ENCODE measurements at regions of chr3 and their contacts with region 1.

Region 1: DNA sequence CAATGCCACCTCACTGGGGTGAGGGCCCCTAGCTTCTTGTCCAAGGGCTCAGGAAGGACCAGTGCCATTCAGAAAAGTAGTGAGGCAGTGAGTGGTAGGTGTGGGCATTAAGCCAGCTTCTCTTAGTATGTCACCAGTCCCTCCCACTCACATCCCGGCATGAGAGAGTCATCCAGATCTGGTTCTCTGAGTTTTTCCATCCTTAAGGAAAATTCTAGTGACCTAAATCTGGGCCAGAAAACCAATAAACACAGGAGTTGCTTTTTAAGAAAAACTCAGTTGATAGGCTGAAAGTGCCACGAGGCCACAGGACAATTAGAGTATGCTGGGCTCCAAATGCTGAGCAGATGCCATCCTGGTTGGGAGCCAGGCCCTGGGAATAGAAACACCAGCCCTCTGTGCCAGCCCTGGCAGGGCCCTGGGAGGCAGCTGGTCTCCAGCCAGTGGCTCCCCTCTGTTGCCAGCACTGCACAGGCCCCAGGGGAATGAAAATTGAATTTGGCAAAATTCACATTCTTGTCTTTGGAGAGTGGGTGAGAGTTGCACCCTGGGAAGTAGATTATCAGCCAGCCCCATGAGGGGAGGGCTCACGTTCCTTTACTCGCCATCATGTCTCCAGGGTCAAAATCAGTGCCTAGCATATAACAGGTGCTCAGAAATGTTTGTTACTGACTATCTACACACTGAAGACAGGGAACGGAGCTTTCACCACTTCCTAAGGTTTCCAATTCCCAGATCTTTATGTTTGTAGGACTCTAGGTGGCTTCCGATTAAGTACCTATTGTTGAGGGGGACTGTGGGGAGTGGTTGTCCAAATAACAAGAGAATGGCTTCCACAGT is 52.8 kb downstream of the FAM43A start:
- DNase-seq: no peak
- ATAC-seq: no peak
- H3K4me3 Mint-ChIP-seq: no peak overlapping the region
- H3K27ac Mint-ChIP-seq: no peak overlapping the region
- H3K4me1 Mint-ChIP-seq: peaks cover 30% of the 10 kb centered on the region
- H3K27me3 Mint-ChIP-seq: no peaks in the 10 kb centered on the region
- CTCF ChIP-seq: no peak

Region 2: DNA sequence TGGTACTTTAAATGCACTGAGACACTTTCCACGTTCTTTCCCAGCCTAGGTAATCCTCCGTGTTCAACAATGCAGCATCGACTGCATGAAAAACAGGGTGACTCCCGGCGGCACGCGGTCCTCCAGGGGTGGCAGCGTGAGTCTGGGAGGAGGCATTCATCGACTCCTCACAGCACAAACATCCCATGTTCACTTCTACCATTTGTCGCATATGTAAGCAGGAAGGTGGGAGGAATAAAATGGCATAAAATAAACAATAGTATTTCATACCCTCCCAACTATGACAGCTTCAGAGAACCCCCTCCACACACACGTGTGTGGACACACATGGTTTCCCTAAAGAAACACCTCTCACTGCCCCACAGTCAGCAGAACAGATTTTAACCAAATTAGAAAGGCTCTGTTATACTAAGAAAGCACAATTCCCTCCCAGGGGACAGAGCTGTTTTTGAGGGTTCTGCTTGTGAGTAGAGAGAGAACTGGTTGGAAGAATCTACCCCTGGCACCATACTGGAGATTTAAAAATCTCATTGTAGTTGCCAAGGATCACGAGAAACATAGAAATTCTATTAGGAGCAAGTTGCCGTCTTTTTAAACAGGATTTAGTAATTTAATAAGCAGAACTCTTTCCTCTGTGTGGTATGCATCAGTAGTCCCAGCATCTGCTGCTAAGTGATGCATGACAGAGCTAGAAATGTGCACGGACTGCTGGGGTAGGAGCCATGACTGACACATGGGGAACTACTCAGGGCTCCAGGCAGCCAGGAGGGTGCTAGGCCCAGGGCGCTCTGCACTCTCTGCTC is 46.8 kb before region 1 on chr3:
- CTCF ChIA-PET with region 1: interaction called, 18 read pairs
- POLR2A ChIA-PET with region 1: interaction called, 83 read pairs
- intact Hi-C with region 1: loop called (anchors 1 kb)
- DNase-seq: peak; percentile 30
- ATAC-seq: peak; percentile 62
- H3K4me3 Mint-ChIP-seq: peak overlapping the region; percentile 73
- H3K27ac Mint-ChIP-seq: peak overlapping the region; percentile 97
- H3K4me1 Mint-ChIP-seq: peaks cover 84% of the 10 kb centered on the region
- H3K27me3 Mint-ChIP-seq: no peaks in the 10 kb centered on the region
- CTCF ChIP-seq: no peak

Region 3: DNA sequence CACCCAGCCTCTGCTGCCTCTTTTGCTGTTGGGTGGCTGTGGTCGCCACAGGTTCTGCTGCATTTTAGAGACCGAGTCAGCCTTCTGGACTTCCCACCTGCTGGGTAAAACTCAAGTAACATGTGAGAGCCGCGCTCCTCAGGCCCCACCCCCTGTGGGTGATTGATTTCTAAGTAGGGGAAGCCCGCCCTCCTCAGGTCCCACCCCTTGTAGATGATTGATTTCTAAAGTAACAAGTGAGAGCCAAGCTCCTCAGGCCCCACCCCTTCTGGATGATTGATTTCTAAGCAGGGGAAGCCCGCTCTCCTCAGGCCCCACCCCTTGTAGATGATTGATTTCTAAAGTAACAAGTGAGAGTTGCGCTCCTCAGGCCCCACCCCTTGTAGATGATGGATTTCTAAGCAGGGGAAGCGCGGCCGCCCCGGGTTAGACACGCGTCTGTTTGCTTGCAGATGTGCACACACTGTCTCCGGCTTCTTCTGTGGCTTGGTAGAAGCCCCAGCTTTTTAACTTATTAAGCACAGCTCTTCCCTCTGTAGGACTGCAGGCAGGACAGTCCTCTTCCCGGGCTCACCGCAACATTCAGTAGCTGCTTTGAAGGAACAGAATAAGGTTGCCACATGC is 30.7 kb after region 1 on chr3:
- CTCF ChIA-PET with region 1: no interaction called
- POLR2A ChIA-PET with region 1: interaction called, 17 read pairs
- intact Hi-C with region 1: loop called (anchors 1 kb)
- DNase-seq: peak; percentile 69
- ATAC-seq: peak; percentile 98
- H3K4me3 Mint-ChIP-seq: peak overlapping the region; percentile 86
- H3K27ac Mint-ChIP-seq: peak overlapping the region; percentile 94
- H3K4me1 Mint-ChIP-seq: peaks cover 34% of the 10 kb centered on the region
- H3K27me3 Mint-ChIP-seq: peaks cover 5% of the 10 kb centered on the region
- CTCF ChIP-seq: no peak

Region 4: DNA sequence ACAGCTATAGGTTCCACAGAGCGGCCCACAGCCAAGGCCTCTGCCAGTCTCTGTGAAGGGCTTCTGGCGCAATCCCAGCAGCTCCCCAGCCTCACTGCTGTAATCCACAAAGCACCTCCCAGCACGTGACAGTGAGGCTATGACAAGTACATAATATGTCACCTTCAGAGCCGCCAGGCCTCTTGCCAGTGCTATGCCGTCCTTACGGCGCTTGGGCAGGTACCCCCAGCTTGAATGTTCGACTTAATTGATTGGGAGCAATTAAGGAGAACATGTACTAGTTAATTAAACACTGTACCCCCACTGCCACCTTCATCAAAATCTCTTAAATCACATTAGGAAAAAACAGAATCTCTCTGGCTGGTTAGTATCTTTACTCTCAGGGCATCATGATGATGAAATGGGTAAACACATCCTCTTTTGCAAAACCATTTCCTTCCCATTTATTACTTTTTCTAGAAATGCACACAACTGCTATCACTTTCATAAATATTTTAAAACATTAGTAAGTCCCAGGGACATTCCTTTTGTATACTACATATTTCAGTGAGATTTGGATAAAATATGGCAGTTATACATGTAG is 362.6 kb after region 1 on chr3:
- CTCF ChIA-PET with region 1: no interaction called
- POLR2A ChIA-PET with region 1: interaction called, 3 read pairs
- intact Hi-C with region 1: loop called (anchors 1 kb)
- DNase-seq: no peak
- ATAC-seq: peak; percentile 66
- H3K4me3 Mint-ChIP-seq: peak overlapping the region; percentile 52
- H3K27ac Mint-ChIP-seq: peak overlapping the region; percentile 91
- H3K4me1 Mint-ChIP-seq: peaks cover 77% of the 10 kb centered on the region
- H3K27me3 Mint-ChIP-seq: no peaks in the 10 kb centered on the region
- CTCF ChIP-seq: no peak

Region 5: DNA sequence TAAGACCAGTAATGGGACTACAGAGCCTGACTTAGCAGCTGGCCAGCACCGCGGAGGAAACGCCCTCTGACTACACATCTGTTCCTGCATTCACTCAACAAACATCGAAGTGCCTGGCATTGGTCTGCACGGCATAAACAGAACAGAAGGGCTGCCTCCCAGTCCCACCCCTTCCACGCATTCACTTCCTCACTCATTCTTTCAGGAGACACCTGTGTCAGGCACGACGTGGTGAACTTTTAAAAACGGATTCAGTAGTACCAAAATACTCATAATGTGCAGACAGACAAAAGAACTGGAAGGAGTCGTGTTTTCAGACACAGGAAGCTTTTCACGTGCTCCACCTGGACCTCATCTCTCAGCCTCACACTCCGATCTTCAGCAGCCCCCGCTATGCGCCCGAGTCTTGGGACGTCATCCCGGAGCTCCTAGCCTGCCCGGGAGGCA is 409.2 kb after region 1 on chr3:
- CTCF ChIA-PET with region 1: no interaction called
- POLR2A ChIA-PET with region 1: no interaction called
- intact Hi-C with region 1: loop called (anchors 2 kb)
- DNase-seq: peak; percentile 34
- ATAC-seq: peak; percentile 72
- H3K4me3 Mint-ChIP-seq: peak overlapping the region; percentile 85
- H3K27ac Mint-ChIP-seq: peak overlapping the region; percentile 84
- H3K4me1 Mint-ChIP-seq: peaks cover 75% of the 10 kb centered on the region
- H3K27me3 Mint-ChIP-seq: no peaks in the 10 kb centered on the region
- CTCF ChIP-seq: no peak